ENCODE measurements at regions of chr3 and their contacts with region 1.

Region 1: GRCh38 chr3:58013973-58014649 is 5.9 kb downstream of the FLNB start:
- DNase-seq: no peak
- ATAC-seq: peak in 1 of 2 experiments; percentile 10; a peak in 3 of 6 replicates
- H3K4me3 ChIP-seq: peak overlapping the region; percentile 99
- H3K27ac ChIP-seq: peak overlapping the region; percentile 84 to 97
- H3K4me1 ChIP-seq: peaks cover 70% of the 10 kb centered on the region
- CTCF ChIP-seq: no peak
- EP300 ChIP-seq: no peak
- POLR2A ChIP-seq: no peak
- RAD21 ChIP-seq: no peak

Region 2: DNA sequence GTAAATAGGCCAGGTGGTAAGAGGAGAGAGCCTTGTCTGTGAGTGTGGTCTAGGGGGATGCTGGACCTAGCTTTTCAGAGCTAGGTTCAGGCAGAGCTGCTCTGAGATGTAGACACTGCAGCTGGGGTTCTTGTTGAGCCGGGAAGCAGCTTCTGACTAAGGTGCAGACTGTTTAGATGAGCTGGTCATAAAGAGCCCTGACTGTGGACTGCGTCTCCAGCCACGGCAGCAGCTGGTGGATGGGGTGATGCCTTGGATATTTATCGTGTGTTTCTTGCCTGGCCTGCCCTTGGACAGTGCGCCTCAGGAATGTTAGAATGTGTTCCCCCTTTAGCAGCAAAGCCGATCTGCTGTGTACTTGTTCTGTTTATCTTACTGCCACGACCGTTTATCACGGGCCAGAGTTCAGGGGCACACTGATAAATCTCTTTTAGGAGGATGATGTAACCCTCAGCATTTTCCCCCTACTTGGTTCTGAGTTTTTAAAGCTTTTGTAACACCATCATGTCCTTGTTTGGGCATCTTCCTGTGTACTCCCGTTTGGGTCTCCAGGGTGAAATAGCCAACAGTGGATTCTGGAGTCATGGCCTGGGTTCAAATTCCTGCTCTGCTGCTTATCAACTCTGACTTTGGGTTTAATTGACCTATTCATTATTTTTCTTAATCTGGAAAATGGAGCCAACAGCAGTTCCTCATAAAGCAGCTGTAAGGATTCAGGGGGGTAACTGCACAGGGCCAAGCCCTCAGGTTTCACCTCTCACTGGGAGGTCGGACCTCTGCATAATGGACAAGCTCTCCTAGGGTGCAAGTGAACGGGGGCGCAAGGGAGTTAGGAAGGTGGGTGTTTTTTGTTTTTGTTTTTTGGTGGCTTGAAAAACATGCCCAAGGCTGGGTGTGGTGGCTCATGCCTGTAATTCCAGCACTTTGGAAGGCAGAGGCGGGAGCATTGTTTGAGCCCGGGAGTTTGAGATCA is 45.5 kb after region 1 on chr3:
- CTCF ChIA-PET with region 1: interaction called, 11 read pairs
- POLR2A ChIA-PET with region 1: interaction called, 12 read pairs
- DNase-seq: peak in 1 of 2 experiments; percentile 82
- ATAC-seq: peak; percentile 76 to 77; a peak in 5 of 6 replicates
- H3K4me3 ChIP-seq: peak overlapping the region; percentile 23; the same call in 1 of the 3 replicates
- H3K27ac ChIP-seq: peak overlapping the region; percentile 88 to 90
- H3K4me1 ChIP-seq: peaks cover 100% of the 10 kb centered on the region
- CTCF ChIP-seq: no peak
- EP300 ChIP-seq: peak in 1 of 2 experiments; percentile 57; a peak in 2 of 5 replicates
- POLR2A ChIP-seq: no peak
- RAD21 ChIP-seq: no peak

Measured in A549 (cell line).